ENCODE measurements at regions of chr12 and their contacts with region 1.

Region 1: DNA sequence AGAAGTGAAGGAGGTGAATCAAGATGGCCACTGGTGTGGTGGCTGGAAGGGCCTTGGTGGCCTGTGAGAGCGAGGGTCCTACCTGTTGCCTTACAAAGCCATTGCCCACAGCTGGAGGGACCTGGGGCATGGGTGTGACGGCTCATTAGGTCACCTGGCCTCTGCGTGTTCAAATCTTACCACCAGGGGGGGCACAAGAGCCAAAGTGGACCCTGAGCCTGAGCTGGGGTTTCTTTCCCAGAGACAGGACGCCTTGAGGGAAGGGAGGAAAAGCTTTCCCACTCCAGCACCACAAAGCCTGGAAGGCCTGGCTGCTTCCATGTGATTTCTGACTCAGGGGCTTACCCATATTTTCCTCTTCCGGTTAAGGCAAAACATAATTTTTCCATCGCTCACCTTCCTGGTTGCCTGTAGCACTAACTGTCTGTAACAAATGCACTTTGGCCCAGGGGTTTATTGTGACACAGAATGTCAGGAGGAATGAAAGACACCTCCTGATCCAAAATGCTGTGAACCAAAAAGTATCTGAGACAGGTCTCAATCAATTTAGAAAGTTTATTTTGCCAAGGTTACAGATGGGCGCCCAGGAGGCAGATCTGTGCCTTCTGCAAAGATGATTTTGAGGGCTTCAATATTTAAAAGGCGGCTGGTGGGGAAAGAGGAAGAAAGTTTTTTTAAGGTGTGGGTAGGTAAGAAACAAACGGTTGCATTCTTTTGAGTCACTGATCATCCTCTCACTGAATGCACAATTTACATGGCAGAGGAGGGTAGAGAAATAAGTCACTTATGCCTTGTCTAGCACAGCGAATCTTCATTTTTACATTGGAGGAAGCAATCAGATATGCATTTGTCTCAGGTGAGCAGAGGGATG is 4.3 kb upstream of the CD9 start:
- DNase-seq: no peak
- H3K4me3 ChIP-seq: no peak overlapping the region
- CTCF ChIP-seq: peak; percentile 93

Region 2: GRCh38 chr12:5923751-5924150 is 272.1 kb before region 1 on chr12:
- CTCF ChIA-PET with region 1: no interaction called
- POLR2A ChIA-PET with region 1: no interaction called
- DNase-seq: no peak
- H3K4me3 ChIP-seq: no peak overlapping the region
- CTCF ChIP-seq: no peak

Region 3: DNA sequence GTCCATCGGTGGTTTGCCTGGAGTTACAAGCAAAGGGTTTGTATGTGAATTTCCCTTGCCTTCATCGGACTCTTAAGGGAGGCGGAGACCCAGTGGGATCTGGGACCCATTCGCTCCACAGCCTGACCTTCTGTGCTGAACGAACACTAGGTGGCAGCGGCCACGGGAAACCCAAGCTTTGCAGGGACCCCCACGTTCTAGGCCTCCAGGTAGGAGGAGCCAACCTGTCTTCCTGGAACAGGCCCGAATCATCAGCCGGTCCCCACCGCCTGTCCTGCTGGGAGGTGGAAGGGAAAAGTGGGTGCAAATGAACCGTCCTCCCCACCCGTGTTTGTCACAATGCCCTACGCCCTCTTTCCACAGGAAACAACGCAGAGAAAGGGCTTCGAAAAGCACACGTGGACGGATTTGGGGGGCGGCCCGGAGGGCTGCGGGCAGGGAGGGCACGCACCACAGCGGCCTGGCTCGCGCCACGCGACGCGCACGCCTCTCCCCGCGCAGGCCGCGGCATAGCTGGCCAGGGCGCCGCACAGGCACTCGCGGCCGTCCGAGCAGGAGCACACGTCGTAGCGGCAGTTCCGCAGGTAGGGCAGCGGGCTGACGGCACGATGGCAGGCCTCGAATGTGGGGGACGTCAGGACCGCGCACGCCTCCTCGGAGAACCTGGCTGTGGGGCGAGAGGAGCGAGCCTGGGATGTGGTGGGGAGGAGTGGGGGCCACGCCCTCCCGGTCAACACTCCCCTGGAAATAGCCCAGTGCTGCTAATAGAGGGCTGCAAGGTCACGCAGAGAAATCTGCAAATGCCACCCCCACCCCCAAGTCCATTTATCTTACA is 139.3 kb before region 1 on chr12:
- CTCF ChIA-PET with region 1: interaction called, 18 read pairs
- POLR2A ChIA-PET with region 1: no interaction called
- DNase-seq: no peak
- H3K4me3 ChIP-seq: no peak overlapping the region
- CTCF ChIP-seq: peak; percentile 35

Region 4: DNA sequence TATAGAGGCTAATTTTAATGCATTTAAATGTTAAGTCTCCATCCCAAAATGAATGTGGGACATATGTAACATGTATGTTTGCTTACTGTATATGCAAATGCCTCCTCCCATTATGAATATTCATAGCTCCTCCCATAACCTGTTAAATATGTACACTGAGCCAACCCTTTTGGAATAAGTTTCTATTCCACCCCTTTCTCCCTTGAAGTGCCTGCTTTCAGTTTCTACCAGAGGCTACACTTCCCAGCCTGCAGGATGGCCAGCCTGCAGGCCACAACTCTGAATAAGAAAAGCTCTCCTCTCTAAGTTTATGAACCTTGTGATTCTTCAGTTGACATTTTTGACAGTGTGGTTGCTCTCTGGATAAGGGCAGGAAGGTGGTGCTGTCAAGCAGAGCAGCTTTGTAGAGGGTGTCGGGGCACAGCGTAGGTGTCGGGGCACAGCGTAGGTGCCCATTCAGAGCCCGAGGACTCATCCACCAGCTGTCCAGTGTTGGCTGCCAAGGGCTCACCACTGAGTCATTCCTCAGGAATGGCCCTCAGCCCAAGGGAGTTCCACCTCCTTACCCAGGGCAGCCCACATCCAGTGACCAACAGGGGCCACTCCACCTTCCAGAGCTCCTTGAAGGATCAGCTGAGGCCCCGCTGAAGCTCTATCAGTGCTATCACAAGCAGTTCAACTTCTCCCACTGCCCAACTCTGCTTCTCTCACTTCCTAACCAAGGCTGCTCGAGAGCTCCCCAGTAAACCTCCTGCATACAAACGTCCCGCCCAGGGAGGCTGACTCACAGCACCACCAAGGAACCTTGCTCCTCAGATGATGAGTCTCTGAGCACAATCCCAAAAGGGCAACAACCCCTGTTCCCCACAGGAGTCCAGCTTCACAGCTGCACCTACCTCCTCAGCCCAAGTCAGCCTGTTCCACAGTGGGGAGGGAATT is 102.8 kb before region 1 on chr12:
- CTCF ChIA-PET with region 1: interaction called, 10 read pairs
- POLR2A ChIA-PET with region 1: no interaction called
- DNase-seq: no peak
- H3K4me3 ChIP-seq: no peak overlapping the region; the same call in 1 of the 2 replicates
- CTCF ChIP-seq: no peak

Region 5: DNA sequence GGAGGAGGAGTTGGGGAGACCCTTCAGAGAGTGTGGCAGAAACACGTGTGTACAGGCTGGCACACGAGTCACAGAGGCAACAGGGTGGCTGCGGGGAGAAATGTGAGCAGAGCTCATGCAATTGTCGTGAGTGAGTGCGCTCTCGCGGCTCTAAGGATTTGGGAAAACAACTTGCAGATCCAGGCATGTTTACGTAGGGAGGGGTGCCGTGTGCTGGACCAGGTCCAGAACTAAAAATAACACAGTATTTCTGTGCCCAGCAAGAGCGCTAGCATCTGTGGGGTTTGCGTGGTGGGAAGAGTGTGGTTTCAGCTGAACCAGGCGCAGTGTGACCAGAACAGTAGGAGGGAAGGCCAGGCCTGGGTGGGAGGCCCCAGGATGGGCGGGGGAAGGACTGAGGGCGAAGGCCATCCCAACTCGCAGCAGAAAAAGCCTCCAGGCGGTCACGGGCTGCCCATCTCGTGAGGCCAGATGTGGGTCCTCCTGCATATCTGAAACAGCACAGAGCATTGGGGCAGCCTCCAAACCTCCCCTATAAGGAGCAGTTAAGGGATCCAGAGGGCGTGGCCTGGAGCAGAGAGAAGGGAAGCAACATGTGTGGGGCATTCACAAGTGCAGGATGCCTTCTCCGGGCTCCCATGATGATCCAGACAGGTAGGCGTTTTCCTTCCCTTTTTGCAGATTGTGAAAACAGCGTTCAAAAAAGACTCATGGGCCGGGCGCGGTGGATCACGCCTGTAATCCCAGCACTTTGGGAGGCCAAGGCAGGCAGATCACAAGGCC is 13.6 kb before region 1 on chr12:
- CTCF ChIA-PET with region 1: interaction called, 58 read pairs
- POLR2A ChIA-PET with region 1: no interaction called
- DNase-seq: no peak
- H3K4me3 ChIP-seq: no peak overlapping the region
- CTCF ChIP-seq: no peak

Region 6: GRCh38 chr12:6222078-6222654 is 26.3 kb after region 1 on chr12:
- CTCF ChIA-PET with region 1: interaction called, 12 read pairs
- POLR2A ChIA-PET with region 1: no interaction called
- DNase-seq: no peak
- H3K4me3 ChIP-seq: no peak overlapping the region
- CTCF ChIP-seq: no peak

Region 7: GRCh38 chr12:6278439-6279255 is 82.7 kb after region 1 on chr12:
- CTCF ChIA-PET with region 1: interaction called, 269 read pairs
- POLR2A ChIA-PET with region 1: interaction called, 5 read pairs
- DNase-seq: no peak
- H3K4me3 ChIP-seq: peak overlapping the region; percentile 60
- CTCF ChIP-seq: peak; percentile 64